ENCODE measurements at regions of chr5 and their contacts with region 1.

Region 1: DNA sequence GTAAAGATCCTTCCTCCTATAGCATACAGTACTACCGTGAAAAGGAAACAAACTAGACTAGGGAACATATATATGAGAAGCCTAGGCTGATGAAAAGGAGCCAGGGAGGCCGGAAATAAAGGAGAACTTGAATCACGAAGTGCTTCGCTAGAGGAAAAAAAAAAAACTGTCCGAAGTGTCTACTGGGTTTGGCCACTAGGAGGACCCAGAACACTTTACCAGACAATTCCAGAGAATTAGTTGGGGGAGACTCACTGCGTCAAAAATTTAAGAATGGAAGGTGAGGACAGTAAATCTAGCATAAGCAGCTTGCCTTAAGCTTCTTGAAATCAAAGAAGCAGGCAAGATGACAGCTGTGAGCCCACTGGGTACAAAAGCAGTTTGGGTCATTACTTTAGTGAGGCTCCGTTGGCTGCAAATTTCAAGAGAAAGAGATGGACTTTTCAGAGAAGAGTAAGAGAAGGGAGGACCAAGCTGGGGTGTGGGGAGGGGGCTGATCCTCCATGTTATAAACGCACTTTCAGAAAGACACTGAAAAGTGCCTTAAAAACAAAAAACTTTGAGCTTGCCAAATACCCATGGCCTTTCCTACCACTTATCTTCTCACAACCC is 47.4 kb downstream of the P4HA2 start:
- DNase-seq: peak; percentile 64
- CTCF ChIP-seq: peak; percentile 63

Region 2: GRCh38 chr5:131906668-131907067 is 273.6 kb before region 1 on chr5:
- CTCF ChIA-PET with region 1: no interaction called
- POLR2A ChIA-PET with region 1: no interaction called
- DNase-seq: no peak
- CTCF ChIP-seq: no peak

Region 3: GRCh38 chr5:132190161-132190817 is 10.0 kb after region 1 on chr5:
- CTCF ChIA-PET with region 1: interaction called, 40 read pairs
- POLR2A ChIA-PET with region 1: no interaction called
- DNase-seq: peak; percentile 63
- CTCF ChIP-seq: peak; percentile 52

Region 4: DNA sequence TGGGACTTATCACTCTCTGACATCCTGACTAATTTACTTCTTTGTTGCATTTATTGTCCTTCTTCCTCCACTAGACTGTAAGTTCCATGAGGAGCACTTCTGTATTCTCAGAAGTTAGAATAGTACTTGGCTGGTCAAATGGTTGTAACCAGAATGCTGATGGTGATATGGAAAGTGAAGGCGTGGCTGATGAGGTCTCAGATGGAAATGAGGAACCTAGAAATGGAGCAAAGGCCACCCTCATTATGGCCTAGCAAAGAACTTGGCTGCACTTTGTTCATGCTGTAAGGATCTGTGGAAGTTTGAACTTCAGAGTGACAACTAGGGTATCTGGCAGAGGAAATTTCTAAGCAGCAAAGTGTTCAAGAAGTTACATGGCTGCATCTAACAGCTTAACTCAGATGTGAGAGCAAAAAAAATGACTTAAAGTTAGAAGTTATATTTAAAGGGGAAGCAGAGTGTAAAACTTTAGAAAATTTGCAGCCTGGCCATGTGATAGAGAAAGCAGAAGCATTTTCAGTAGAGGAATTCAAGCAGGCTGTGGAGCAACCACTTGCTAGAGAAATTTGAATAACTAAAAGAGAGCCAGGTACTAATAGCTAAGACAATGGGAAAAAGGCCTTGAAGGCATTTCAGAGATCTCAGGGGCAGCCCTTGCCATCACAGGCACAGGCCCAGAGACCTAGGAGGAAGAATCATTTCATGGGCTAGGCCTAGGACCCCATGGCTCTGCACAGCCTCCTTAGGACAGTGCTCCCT is 174.3 kb after region 1 on chr5:
- CTCF ChIA-PET with region 1: no interaction called
- POLR2A ChIA-PET with region 1: no interaction called
- DNase-seq: no peak
- CTCF ChIP-seq: no peak